ENCODE measurements at regions of chr3 and their contacts with region 1.

Region 1: DNA sequence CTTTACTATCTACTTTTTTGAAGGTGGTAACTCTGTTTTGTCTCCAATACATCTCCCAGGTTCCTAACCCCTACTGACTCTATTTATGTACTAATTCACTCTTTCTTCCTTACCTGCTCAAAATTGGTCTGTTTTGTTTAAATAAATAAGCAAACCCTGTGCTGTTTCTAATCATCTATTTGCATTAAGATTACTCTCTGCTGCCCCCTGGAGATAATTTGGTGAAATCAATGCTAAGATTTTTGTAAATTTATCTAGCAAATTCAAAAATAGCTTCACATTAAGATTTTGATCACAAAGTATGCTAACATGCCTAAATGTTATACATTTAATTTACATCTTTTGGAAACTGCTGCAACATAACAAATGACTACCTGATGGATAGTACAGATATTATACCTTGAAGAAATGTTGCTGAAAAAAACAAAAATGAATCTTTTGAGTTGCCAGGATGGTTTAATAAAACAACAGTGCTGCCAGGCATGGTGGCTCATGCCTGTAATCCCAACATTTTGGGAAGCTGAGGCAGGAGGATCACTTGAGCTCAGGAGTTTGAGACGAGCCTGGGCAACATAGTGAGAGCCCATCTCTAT is 4.4 kb upstream of the CD200R1 start:
- DNase-seq: no peak
- ATAC-seq: no peak
- H3K4me3 ChIP-seq: no peak overlapping the region
- H3K27ac ChIP-seq: no peak overlapping the region
- H3K4me1 ChIP-seq: peaks cover 0 to 25% (median 0%) of the 10 kb centered on the region in 9 donors
- H3K27me3 ChIP-seq: no peaks in the 10 kb centered on the region
- CTCF ChIP-seq: peak; percentile 50 to 85 (median 74)

Region 2: GRCh38 chr3:112582244-112582874 is 397.0 kb before region 1 on chr3:
- intact Hi-C with region 1: loop called in 8 of 10 experiments (anchors 2 to 10 kb)
- DNase-seq: peak in 1 of 2 donors; percentile 19
- ATAC-seq: no peak
- H3K4me3 ChIP-seq: no peak overlapping the region
- H3K27ac ChIP-seq: no peak overlapping the region
- H3K4me1 ChIP-seq: peaks cover 0 to 16% (median 0%) of the 10 kb centered on the region in 9 donors
- H3K27me3 ChIP-seq: no peaks in the 10 kb centered on the region
- CTCF ChIP-seq: peak; percentile 25 to 76 (median 66)

Region 3: DNA sequence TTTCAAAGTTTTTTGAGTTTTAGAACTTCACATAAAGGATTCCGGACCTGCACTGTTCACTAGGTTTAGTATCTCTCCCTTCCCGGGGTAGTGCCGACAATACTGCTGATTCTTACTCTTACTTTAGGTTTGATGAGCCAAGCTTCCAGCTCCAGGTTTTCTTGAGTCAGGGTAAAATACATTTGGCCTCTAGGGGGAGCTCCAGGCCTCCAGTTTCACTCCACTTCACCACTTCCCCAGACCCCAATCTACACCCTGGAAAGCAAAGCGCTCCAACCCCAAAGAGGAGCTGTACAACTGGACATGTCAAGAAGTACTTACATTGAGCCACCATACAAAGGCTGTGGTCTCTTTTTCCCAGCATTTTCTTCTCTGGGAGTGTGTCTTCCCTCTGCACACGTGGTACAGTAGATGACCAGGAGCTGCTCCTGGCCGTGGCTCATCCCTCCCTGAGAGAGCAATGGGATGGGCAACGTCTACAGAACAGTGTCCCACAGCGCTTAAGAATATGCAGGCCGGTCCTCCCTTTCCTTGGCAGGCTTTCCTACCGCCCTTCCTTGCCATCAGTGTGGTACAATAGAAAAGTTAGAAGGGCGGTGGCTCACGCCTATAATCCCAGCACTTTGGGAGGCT is 244.5 kb before region 1 on chr3:
- intact Hi-C with region 1: loop called in 8 of 10 experiments (anchors 2 to 10 kb)
- DNase-seq: peak in 1 of 2 donors; percentile 62
- ATAC-seq: peak in 6 of 8 donors; percentile 46 to 75 (median 72)
- H3K4me3 ChIP-seq: no peak overlapping the region
- H3K27ac ChIP-seq: no peak overlapping the region
- H3K4me1 ChIP-seq: peaks cover 0 to 27% (median 0%) of the 10 kb centered on the region in 9 donors
- H3K27me3 ChIP-seq: peaks cover 0 to 6% (median 0%) of the 10 kb centered on the region in 7 donors
- CTCF ChIP-seq: peak; percentile 32 to 78 (median 65)

Region 4: DNA sequence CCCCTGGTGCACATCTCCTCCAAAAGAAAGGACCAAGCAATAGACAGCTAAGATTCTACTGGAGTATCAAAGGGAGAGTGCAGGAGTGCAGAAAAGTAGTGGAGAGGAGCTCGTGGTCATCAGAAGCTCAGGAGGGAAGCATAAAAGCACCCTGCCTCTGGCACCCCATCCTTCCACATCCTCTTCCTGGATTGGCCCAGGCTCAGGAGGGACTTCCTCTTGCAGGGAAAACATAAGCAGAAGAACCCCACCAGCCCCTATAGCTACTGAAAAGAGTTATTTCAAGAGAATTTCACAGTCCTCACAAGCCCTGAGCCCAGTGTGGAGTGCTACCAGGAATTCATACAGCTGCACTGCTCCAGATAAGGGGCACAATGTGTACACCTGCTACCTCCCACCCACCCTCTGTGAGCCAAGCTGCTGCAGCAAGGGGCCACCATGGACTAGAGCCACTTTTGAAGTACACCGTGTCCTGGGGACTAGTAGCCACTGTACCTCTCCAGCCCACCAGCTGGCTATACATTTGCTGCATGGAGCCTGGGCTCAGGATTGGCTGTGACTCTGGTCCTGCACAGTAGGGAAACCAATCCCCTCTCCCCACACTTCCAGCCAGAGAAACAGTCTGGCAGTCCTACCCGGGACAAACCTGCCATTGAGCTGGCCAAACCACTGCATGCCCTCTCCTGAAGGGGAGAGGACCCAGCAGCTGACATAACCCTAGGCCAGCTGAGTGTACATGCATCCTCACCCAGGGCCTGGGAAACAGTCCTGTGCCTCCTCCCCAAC is 47.4 kb before region 1 on chr3:
- intact Hi-C with region 1: no loop called
- DNase-seq: no peak
- ATAC-seq: peak in 2 of 8 donors; percentile 25 to 47
- H3K4me3 ChIP-seq: no peak overlapping the region
- H3K27ac ChIP-seq: no peak overlapping the region
- H3K4me1 ChIP-seq: peaks cover 0 to 9% (median 0%) of the 10 kb centered on the region in 9 donors
- H3K27me3 ChIP-seq: no peaks in the 10 kb centered on the region
- CTCF ChIP-seq: no peak

Region 5: DNA sequence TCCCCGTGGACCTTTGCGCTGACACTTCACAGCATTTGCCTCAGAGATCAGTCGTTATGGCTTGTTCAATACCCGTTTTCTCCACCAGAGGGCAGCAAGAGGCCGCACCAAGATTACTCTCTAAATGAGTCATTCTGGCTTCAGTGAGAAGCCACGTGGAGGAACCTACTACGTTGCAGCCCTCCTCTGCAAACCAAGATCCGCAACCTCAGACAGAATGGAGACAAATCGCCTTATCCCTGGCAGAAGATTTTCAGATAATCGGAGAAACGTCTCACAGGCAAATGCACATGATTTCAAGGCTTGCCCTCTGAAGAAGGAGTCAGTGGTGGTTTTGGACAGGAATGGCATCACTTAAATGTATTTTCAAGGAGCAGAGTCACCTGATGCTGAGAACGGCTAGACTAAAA is 72.0 kb after region 1 on chr3:
- intact Hi-C with region 1: no loop called
- DNase-seq: peak; percentile 60 to 89
- ATAC-seq: peak; percentile 81 to 97 (median 96)
- H3K4me3 ChIP-seq: peak overlapping the region in 1 of 10 donors; percentile 17
- H3K27ac ChIP-seq: no peak overlapping the region
- H3K4me1 ChIP-seq: peaks cover 0 to 32% (median 5%) of the 10 kb centered on the region in 9 donors
- H3K27me3 ChIP-seq: no peaks in the 10 kb centered on the region
- CTCF ChIP-seq: peak; percentile 80 to 98 (median 96)

Measured in heart right ventricle (tissue), 16 donors.